Naive thymus-derived CD4-positive, alpha-beta T cell (primary cell): ENCODE measurements at regions of chr12 and their contacts with region 1.

Region 1: DNA sequence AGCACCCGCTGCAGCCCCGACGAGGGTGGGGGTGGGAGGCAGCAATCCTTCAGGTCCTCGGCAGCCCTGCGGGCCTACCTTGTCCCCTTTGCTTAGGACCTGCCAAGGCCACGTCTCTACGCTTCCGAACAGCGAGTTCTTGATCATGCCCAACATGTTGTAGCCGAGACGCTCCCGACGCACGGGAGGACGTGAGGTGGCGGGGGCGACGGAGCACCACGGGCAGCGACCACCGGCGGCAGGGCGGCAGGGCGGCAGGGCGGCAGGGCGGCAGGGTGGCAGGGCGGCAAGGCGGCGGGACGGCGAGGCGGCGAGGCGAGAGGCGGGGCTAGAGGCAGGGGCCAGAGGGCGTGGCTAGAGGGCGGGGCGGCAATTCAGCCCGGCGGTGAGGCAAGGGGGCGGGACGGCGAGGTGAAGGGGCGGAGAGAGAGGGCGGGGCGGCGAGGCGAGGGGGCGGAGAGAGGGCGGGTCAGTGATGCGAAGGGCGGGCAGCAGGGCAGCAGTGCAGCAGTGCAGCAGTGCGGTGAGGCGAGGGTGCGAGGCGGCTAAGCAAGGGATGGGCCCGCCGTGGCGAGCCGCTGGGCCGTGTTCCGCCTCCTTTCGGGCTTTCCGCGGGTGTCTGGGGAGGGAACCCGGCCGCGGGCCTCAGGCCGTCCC is at the start of gene HEBP1:
- DNase-seq: peak; percentile 86 to 99 (median 93)
- ATAC-seq: peak; percentile 97
- H3K4me3 ChIP-seq: peak within 1 kb of the TSS; percentile 74
- H3K4me3 Mint-ChIP-seq: peak within 1 kb of the TSS; percentile 90 to 98 (median 95)
- H3K27ac ChIP-seq: peak within 1 kb of the TSS; percentile 83
- H3K27ac Mint-ChIP-seq: peak within 1 kb of the TSS; percentile 53 to 96 (median 90)
- H3K4me1 ChIP-seq: peaks cover 8 to 23% of the 10 kb centered on the region in 2 donors
- H3K4me1 Mint-ChIP-seq: peaks cover 30 to 45% (median 35%) of the 10 kb centered on the region in 7 donors
- H3K27me3 ChIP-seq: peaks cover 0 to 5% of the 10 kb centered on the region in 2 donors
- H3K27me3 Mint-ChIP-seq: peaks cover 0 to 31% (median 0%) of the 10 kb centered on the region in 5 donors
- total RNA-seq, gene HEBP1: 10.9 to 23.4 (median 13.6) TPM

Region 2: GRCh38 chr12:12611512-12612306 is 388.4 kb before region 1 on chr12 and contains the start of gene CREBL2:
- CTCF ChIA-PET with region 1: no interaction called
- POLR2A ChIA-PET with region 1: no interaction called
- intact Hi-C with region 1: no loop called
- DNase-seq: peak; percentile 61 to 91 (median 89)
- ATAC-seq: peak; percentile 97
- H3K4me3 ChIP-seq: peak within 1 kb of the TSS; percentile 94
- H3K4me3 Mint-ChIP-seq: peak within 1 kb of the TSS; percentile 84 to 99 (median 93)
- H3K27ac ChIP-seq: peak within 1 kb of the TSS; percentile 98
- H3K27ac Mint-ChIP-seq: peak within 1 kb of the TSS; percentile 91 to 100 (median 99)
- H3K4me1 ChIP-seq: peaks cover 12 to 18% of the 10 kb centered on the region in 2 donors
- H3K4me1 Mint-ChIP-seq: peaks cover 38 to 74% (median 57%) of the 10 kb centered on the region in 7 donors
- H3K27me3 ChIP-seq: no peaks in the 10 kb centered on the region
- H3K27me3 Mint-ChIP-seq: no peaks in the 10 kb centered on the region
- total RNA-seq, gene CREBL2: 17.3 to 39.5 (median 24.9) TPM

Region 3: GRCh38 chr12:12724661-12725545 is 275.2 kb before region 1 on chr12:
- CTCF ChIA-PET with region 1: no interaction called
- POLR2A ChIA-PET with region 1: no interaction called
- intact Hi-C with region 1: loop called (anchors 2 to 5 kb)
- DNase-seq: peak; percentile 78 to 97 (median 92)
- ATAC-seq: peak; percentile 77
- H3K4me3 ChIP-seq: peak overlapping the region; percentile 53
- H3K4me3 Mint-ChIP-seq: peak overlapping the region; percentile 87 to 98 (median 94)
- H3K27ac ChIP-seq: peak overlapping the region; percentile 99
- H3K27ac Mint-ChIP-seq: peak overlapping the region; percentile 96 to 99 (median 97)
- H3K4me1 ChIP-seq: peaks cover 28% of the 10 kb centered on the region in 2 donors
- H3K4me1 Mint-ChIP-seq: peaks cover 23 to 64% (median 56%) of the 10 kb centered on the region in 7 donors
- H3K27me3 ChIP-seq: no peaks in the 10 kb centered on the region
- H3K27me3 Mint-ChIP-seq: peaks cover 0 to 7% (median 0%) of the 10 kb centered on the region in 5 donors

Region 4: GRCh38 chr12:12803186-12803585 is 196.9 kb before region 1 on chr12:
- CTCF ChIA-PET with region 1: no interaction called
- POLR2A ChIA-PET with region 1: no interaction called
- intact Hi-C with region 1: loop called in 1 of 2 experiments (anchors 1 kb)
- DNase-seq: peak in 3 of 9 donors; percentile 11 to 46 (median 35)
- ATAC-seq: peak; percentile 28
- H3K4me3 ChIP-seq: no peak overlapping the region
- H3K4me3 Mint-ChIP-seq: peak overlapping the region in 3 of 10 donors; percentile 31 to 77 (median 31)
- H3K27ac ChIP-seq: no peak overlapping the region
- H3K27ac Mint-ChIP-seq: peak overlapping the region; percentile 16 to 98 (median 73)
- H3K4me1 ChIP-seq: peaks cover 13 to 17% of the 10 kb centered on the region in 2 donors
- H3K4me1 Mint-ChIP-seq: peaks cover 25 to 64% (median 55%) of the 10 kb centered on the region in 7 donors
- H3K27me3 ChIP-seq: no peaks in the 10 kb centered on the region
- H3K27me3 Mint-ChIP-seq: no peaks in the 10 kb centered on the region

Region 5: GRCh38 chr12:12837025-12837872 is 162.8 kb before region 1 on chr12:
- CTCF ChIA-PET with region 1: interaction called, 3 read pairs
- POLR2A ChIA-PET with region 1: no interaction called
- intact Hi-C with region 1: loop called in 1 of 2 experiments (anchors 5 kb)
- DNase-seq: peak in 8 of 9 donors; percentile 34 to 68 (median 52)
- ATAC-seq: peak; percentile 80
- H3K4me3 ChIP-seq: no peak overlapping the region
- H3K4me3 Mint-ChIP-seq: peak overlapping the region; percentile 15 to 74 (median 35)
- H3K27ac ChIP-seq: no peak overlapping the region
- H3K27ac Mint-ChIP-seq: peak overlapping the region; percentile 40 to 95 (median 85)
- H3K4me1 ChIP-seq: peaks cover 0 to 26% of the 10 kb centered on the region in 2 donors
- H3K4me1 Mint-ChIP-seq: peaks cover 11 to 37% (median 34%) of the 10 kb centered on the region in 7 donors
- H3K27me3 ChIP-seq: no peaks in the 10 kb centered on the region
- H3K27me3 Mint-ChIP-seq: no peaks in the 10 kb centered on the region

Region 6: DNA sequence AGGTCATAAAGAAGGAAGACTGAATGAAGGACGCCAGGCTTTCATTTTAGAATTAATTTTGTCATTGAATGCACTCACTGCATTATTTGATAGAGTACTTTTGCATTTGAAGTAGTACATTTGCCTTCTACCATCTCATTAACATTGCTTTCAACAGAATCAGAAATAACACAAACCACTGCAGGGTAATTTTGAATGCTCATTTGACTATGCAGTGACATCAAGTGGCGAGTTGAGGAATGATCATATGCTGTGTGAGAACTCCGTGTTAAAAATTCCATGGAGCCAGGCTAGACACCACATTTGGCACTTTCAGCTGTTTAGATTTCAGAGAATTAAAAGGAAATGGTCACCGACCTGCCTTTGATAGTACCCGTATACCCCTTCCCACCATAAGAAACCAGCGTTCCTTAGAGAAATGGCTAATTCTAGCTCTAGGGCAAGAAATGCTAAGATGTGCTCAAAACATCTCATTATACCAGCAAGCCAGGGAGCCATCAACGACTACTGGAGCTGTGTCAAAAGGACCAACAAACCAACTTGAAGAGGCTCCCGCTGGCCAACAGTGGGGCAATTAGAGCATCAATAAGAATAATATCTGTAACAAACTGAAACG is 16.6 kb before region 1 on chr12:
- CTCF ChIA-PET with region 1: interaction called, 3 read pairs
- POLR2A ChIA-PET with region 1: no interaction called
- intact Hi-C with region 1: loop called in 1 of 2 experiments (anchors 2 kb)
- DNase-seq: peak in 5 of 9 donors; percentile 4 to 43 (median 19)
- ATAC-seq: peak; percentile 57
- H3K4me3 ChIP-seq: no peak overlapping the region
- H3K4me3 Mint-ChIP-seq: no peak overlapping the region
- H3K27ac ChIP-seq: no peak overlapping the region
- H3K27ac Mint-ChIP-seq: no peak overlapping the region
- H3K4me1 ChIP-seq: no peaks in the 10 kb centered on the region
- H3K4me1 Mint-ChIP-seq: no peaks in the 10 kb centered on the region
- H3K27me3 ChIP-seq: no peaks in the 10 kb centered on the region
- H3K27me3 Mint-ChIP-seq: no peaks in the 10 kb centered on the region

Region 7: GRCh38 chr12:13165617-13166041 is 165.5 kb after region 1 on chr12:
- CTCF ChIA-PET with region 1: no interaction called
- POLR2A ChIA-PET with region 1: no interaction called
- intact Hi-C with region 1: loop called in 1 of 2 experiments (anchors 5 kb)
- DNase-seq: peak; percentile 14 to 60 (median 46)
- ATAC-seq: peak; percentile 82
- H3K4me3 ChIP-seq: no peak overlapping the region
- H3K4me3 Mint-ChIP-seq: peak overlapping the region; percentile 5 to 63 (median 50)
- H3K27ac ChIP-seq: peak overlapping the region; percentile 1
- H3K27ac Mint-ChIP-seq: peak overlapping the region; percentile 11 to 82 (median 76)
- H3K4me1 ChIP-seq: peaks cover 13 to 24% of the 10 kb centered on the region in 2 donors
- H3K4me1 Mint-ChIP-seq: peaks cover 16 to 35% (median 23%) of the 10 kb centered on the region in 7 donors
- H3K27me3 ChIP-seq: no peaks in the 10 kb centered on the region
- H3K27me3 Mint-ChIP-seq: peaks cover 0 to 24% (median 0%) of the 10 kb centered on the region in 5 donors

Region 8: GRCh38 chr12:13211859-13212664 is 212.0 kb after region 1 on chr12:
- CTCF ChIA-PET with region 1: no interaction called
- POLR2A ChIA-PET with region 1: no interaction called
- intact Hi-C with region 1: loop called (anchors 1 to 5 kb)
- DNase-seq: peak; percentile 29 to 81 (median 73)
- ATAC-seq: peak; percentile 87
- H3K4me3 ChIP-seq: no peak overlapping the region
- H3K4me3 Mint-ChIP-seq: peak overlapping the region in 1 of 10 donors; percentile 55
- H3K27ac ChIP-seq: no peak overlapping the region
- H3K27ac Mint-ChIP-seq: peak overlapping the region in 3 of 9 donors; percentile 19 to 76 (median 70)
- H3K4me1 ChIP-seq: no peaks in the 10 kb centered on the region
- H3K4me1 Mint-ChIP-seq: peaks cover 5 to 29% (median 7%) of the 10 kb centered on the region in 7 donors
- H3K27me3 ChIP-seq: no peaks in the 10 kb centered on the region
- H3K27me3 Mint-ChIP-seq: peaks cover 0 to 13% (median 0%) of the 10 kb centered on the region in 5 donors